WTC11 (cell line): ENCODE measurements at regions of chr12 and their contacts with region 1.

Region 1: GRCh38 chr12:98532681-98533304 is 17.4 kb downstream of the TMPO start:
- DNase-seq: no peak
- ATAC-seq: peak; percentile 83
- H3K4me3 Mint-ChIP-seq: no peak overlapping the region
- H3K27ac Mint-ChIP-seq: no peak overlapping the region
- H3K4me1 Mint-ChIP-seq: no peaks in the 10 kb centered on the region
- H3K27me3 Mint-ChIP-seq: no peaks in the 10 kb centered on the region
- CTCF ChIP-seq: peak; percentile 68

Region 2: GRCh38 chr12:98424726-98425401 is 107.9 kb before region 1 on chr12:
- CTCF ChIA-PET with region 1: interaction called, 11 read pairs
- POLR2A ChIA-PET with region 1: no interaction called
- DNase-seq: peak; percentile 57
- ATAC-seq: peak; percentile 74
- H3K4me3 Mint-ChIP-seq: no peak overlapping the region
- H3K27ac Mint-ChIP-seq: no peak overlapping the region; the same call in 1 of the 2 replicates
- H3K4me1 Mint-ChIP-seq: peaks cover 4% of the 10 kb centered on the region
- H3K27me3 Mint-ChIP-seq: no peaks in the 10 kb centered on the region
- CTCF ChIP-seq: peak; percentile 36; the same call in 1 of the 2 replicates

Region 3: DNA sequence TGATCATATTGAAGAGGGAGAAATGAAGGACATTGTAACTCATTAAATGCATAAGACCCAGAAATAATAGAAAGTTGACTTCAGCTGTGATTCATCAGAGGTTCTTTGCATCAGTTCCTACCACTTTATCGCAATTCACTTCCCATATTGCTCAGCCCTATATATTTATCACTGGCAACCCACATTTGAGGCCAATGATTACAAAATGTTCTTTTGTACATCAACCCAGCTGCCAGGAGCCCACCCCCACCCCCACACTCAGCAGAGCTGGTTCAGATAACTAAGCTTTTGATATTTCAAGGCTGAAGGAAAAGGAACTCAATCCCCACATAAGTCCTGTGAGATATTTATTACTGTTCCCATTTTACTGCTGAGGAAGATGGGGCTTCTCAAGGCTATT is 68.6 kb before region 1 on chr12:
- CTCF ChIA-PET with region 1: no interaction called
- POLR2A ChIA-PET with region 1: interaction called, 10 read pairs
- DNase-seq: no peak
- ATAC-seq: no peak
- H3K4me3 Mint-ChIP-seq: no peak overlapping the region
- H3K27ac Mint-ChIP-seq: no peak overlapping the region
- H3K4me1 Mint-ChIP-seq: no peaks in the 10 kb centered on the region
- H3K27me3 Mint-ChIP-seq: no peaks in the 10 kb centered on the region
- CTCF ChIP-seq: no peak